Right cardiac atrium (tissue), 5 donors: ENCODE measurements at regions of chr12 and their contacts with region 1.

Region 1: GRCh38 chr12:131673888-131674257 is 37.0 kb upstream of the SFSWAP start:
- DNase-seq: no peak
- ATAC-seq: no peak
- H3K4me3 ChIP-seq: no peak overlapping the region
- H3K27ac ChIP-seq: no peak overlapping the region
- H3K4me1 ChIP-seq: no peaks in the 10 kb centered on the region
- H3K27me3 ChIP-seq: no peaks in the 10 kb centered on the region

Region 2: GRCh38 chr12:131290255-131290959 is 383.5 kb before region 1 on chr12:
- intact Hi-C with region 1: loop called in 2 of 4 experiments (anchors 5 to 10 kb)
- DNase-seq: no peak
- ATAC-seq: no peak
- H3K4me3 ChIP-seq: no peak overlapping the region
- H3K27ac ChIP-seq: no peak overlapping the region
- H3K4me1 ChIP-seq: no peaks in the 10 kb centered on the region
- H3K27me3 ChIP-seq: no peaks in the 10 kb centered on the region